ENCODE measurements at regions of chr14 and their contacts with region 1.

Region 1: GRCh38 chr14:103715052-103716000 is at the starts of genes XRCC3 and ZFYVE21:
- DNase-seq: peak; percentile 100
- ATAC-seq: peak; percentile 97
- H3K4me3 Mint-ChIP-seq: peak within 1 kb of the TSS; percentile 86
- H3K27ac Mint-ChIP-seq: peak within 1 kb of the TSS; percentile 87
- H3K4me1 Mint-ChIP-seq: peaks cover 47% of the 10 kb centered on the region
- H3K27me3 Mint-ChIP-seq: no peaks in the 10 kb centered on the region
- CTCF ChIP-seq: no peak
- total RNA-seq, gene XRCC3: 47.3 to 55.2 TPM
- total RNA-seq, gene ZFYVE21: 10.4 to 11.6 TPM

Region 2: DNA sequence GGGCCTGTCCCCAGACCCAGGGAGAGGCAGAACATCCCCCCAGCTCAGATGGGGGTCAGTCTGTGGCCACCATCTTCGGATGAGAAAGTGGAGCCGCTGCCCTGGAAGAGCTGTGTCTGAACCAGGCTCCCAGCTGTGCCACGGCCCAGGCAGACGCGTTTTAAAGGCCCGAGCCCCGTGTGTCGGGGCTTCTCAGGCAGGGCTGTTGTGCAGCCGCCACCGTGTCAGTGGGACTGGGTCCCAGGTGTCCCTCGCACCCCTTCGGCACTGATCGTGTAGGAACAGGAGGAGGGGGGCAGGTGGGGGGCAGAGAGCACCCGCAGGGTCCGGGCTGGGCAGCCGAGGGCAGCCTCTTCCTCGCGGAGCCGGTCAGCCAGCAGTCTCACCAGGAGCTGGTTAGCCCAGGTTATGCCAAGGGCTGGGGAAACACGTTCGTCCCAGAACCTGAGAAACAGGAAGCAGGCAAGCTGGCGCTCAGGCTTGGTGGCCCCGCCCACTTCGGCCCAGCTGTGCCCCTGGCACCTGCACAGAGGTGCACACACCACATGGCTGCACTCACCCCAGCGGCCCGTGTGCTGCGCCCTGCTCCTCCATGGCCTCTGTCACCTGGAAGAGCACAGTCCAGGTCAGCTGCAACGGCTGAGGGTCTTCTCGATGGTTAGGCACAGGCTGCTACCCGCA is 16.6 kb before region 1 on chr14:
- CTCF ChIA-PET with region 1: no interaction called
- POLR2A ChIA-PET with region 1: interaction called, 41 read pairs
- intact Hi-C with region 1: no loop called
- DNase-seq: no peak
- ATAC-seq: no peak
- H3K4me3 Mint-ChIP-seq: no peak overlapping the region
- H3K27ac Mint-ChIP-seq: no peak overlapping the region
- H3K4me1 Mint-ChIP-seq: peaks cover 6% of the 10 kb centered on the region
- H3K27me3 Mint-ChIP-seq: no peaks in the 10 kb centered on the region
- CTCF ChIP-seq: no peak

Measured in activated CD8-positive, alpha-beta T cell treated with anti-CD3 and anti-CD28 coated beads for 36 hours (primary cell).